MCF 10A (cell line): ENCODE measurements at regions of chr3 and their contacts with region 1.

Region 1: DNA sequence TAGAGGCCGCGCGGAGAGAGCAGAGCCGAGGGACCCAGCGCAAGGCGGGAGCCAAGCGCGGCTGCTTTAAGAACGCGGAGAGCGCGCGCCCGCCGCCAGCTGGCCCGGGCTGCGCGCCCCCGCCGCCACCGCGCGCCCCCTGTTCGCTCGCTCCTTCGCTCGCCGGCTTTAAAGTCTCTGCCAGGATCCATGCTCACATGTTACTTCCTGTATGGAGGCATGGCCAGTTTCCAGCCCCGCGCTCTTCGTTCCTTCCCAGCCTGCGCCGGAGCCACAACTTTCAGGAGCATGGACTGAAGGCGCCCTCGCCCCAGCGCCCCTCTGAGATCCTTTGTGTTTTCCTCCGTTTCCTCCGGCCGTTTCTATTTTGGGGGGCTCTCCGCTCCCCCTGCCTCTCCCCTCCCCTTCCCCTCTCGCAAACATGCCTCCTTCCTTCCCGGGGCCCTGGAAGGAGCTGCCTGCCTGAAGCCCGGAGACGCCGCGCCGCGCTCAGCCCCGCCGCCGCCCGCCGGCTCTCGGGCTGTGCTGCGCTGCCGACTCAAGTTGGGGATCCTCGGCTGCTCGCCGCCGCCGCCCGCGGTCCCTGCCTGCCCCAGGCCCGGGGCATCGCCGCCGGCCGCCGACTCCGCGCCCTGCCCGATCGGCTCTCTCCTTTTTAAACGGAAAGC is at the start of gene PTPRG:
- DNase-seq: peak; percentile 94
- H3K4me3 Mint-ChIP-seq: peak within 1 kb of the TSS; percentile 91
- H3K27ac Mint-ChIP-seq: peak within 1 kb of the TSS; percentile 94
- H3K4me1 Mint-ChIP-seq: peaks cover 19% of the 10 kb centered on the region
- H3K27me3 Mint-ChIP-seq: no peaks in the 10 kb centered on the region
- CTCF ChIP-seq: no peak
- total RNA-seq, gene PTPRG: 47.9 and 54.5 TPM in 2 replicates

Region 2: DNA sequence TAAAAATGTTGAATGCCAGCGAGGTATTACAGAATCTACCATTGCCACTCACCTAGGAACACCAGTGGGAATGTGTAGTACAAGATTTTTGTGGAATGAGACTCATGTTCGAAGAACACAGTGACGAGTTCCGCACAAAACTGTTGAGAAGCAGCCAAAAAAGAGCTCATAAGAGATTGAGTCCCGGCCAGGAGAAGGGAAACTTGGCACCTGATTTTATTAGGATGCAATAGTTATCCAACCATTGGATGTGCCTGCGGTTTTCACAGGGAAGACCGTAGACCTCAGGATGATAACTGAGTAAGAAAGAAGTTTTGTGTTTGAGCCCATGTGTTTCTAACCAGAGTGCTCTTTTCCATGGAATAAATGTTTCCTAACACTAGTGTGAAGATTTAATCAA is 88.8 kb after region 1 on chr3:
- CTCF ChIA-PET with region 1: interaction called, 4 read pairs
- POLR2A ChIA-PET with region 1: interaction called, 11 read pairs
- intact Hi-C with region 1: no loop called
- DNase-seq: peak; percentile 77
- H3K4me3 Mint-ChIP-seq: peak overlapping the region; percentile 15
- H3K27ac Mint-ChIP-seq: peak overlapping the region; percentile 14
- H3K4me1 Mint-ChIP-seq: peaks cover 4% of the 10 kb centered on the region
- H3K27me3 Mint-ChIP-seq: no peaks in the 10 kb centered on the region
- CTCF ChIP-seq: no peak

Region 3: GRCh38 chr3:61664095-61664482 is 102.6 kb after region 1 on chr3:
- CTCF ChIA-PET with region 1: no interaction called
- POLR2A ChIA-PET with region 1: no interaction called
- intact Hi-C with region 1: no loop called
- DNase-seq: peak; percentile 89
- H3K4me3 Mint-ChIP-seq: no peak overlapping the region
- H3K27ac Mint-ChIP-seq: peak overlapping the region; percentile 83
- H3K4me1 Mint-ChIP-seq: peaks cover 20% of the 10 kb centered on the region
- H3K27me3 Mint-ChIP-seq: no peaks in the 10 kb centered on the region
- CTCF ChIP-seq: no peak

Region 4: GRCh38 chr3:61778145-61778494 is 216.6 kb after region 1 on chr3:
- CTCF ChIA-PET with region 1: no interaction called
- POLR2A ChIA-PET with region 1: no interaction called
- intact Hi-C with region 1: loop called (anchors 10 kb)
- DNase-seq: no peak
- H3K4me3 Mint-ChIP-seq: no peak overlapping the region
- H3K27ac Mint-ChIP-seq: no peak overlapping the region
- H3K4me1 Mint-ChIP-seq: peaks cover 36% of the 10 kb centered on the region
- H3K27me3 Mint-ChIP-seq: no peaks in the 10 kb centered on the region
- CTCF ChIP-seq: no peak

Region 5: DNA sequence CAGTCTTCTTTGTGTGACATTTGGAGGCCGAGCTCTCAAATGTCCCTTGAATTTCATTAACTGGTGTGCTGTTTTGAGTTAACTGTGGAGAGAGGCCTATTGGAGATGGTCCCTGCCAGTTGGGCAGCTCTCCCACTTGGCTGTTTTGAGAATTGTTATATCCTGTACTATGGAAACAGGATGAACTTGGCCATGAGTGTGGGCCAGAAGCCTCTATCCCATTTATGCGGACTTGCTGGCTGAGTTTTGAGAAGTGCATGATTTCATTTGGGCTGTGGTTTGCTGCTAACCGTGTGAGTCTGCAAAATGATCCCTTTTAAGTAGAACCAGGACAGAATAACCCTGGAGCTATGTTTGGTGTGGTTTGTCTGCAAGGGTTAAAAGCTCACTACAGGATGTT is 365.8 kb after region 1 on chr3:
- CTCF ChIA-PET with region 1: no interaction called
- POLR2A ChIA-PET with region 1: no interaction called
- intact Hi-C with region 1: loop called (anchors 5 kb)
- DNase-seq: peak; percentile 16
- H3K4me3 Mint-ChIP-seq: no peak overlapping the region
- H3K27ac Mint-ChIP-seq: peak overlapping the region; percentile 37
- H3K4me1 Mint-ChIP-seq: peaks cover 33% of the 10 kb centered on the region
- H3K27me3 Mint-ChIP-seq: no peaks in the 10 kb centered on the region
- CTCF ChIP-seq: no peak

Region 6: GRCh38 chr3:62109534-62109933 is 548.0 kb after region 1 on chr3:
- CTCF ChIA-PET with region 1: no interaction called
- POLR2A ChIA-PET with region 1: no interaction called
- intact Hi-C with region 1: loop called (anchors 1 kb)
- DNase-seq: peak; percentile 92
- H3K4me3 Mint-ChIP-seq: no peak overlapping the region
- H3K27ac Mint-ChIP-seq: peak overlapping the region; percentile 88
- H3K4me1 Mint-ChIP-seq: peaks cover 17% of the 10 kb centered on the region
- H3K27me3 Mint-ChIP-seq: no peaks in the 10 kb centered on the region
- CTCF ChIP-seq: peak; percentile 20